Transverse colon (tissue), 4 donors: ENCODE measurements at regions of chr12 and their contacts with region 1.

Region 1: DNA sequence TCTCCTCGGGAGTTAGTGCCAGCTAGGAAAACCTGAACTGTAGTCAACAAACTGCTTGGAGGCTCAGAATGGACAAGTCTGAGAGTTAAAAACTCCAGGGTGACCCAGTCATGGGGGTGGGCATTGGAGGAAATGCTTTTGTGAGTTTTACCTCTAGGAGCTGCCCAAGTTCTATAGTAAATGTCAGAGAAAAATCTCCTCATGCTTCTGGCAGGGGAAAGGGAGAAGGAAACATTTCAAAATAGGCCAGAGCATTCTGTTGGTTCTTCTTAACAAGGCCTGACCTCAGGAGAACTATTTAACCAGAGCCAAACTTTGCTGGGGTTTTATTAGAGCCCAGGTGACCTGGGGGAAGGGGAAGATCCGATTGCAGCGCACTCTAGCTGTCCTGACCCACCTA is 12.3 kb downstream of the NINJ2 start:
- DNase-seq: no peak
- H3K4me3 ChIP-seq: no peak overlapping the region
- H3K27ac ChIP-seq: no peak overlapping the region
- H3K4me1 ChIP-seq: peaks cover 3 to 10% (median 6%) of the 10 kb centered on the region in 4 donors
- H3K27me3 ChIP-seq: no peaks in the 10 kb centered on the region
- CTCF ChIP-seq: no peak
- EP300 ChIP-seq: no peak
- POLR2A ChIP-seq: no peak

Region 2: DNA sequence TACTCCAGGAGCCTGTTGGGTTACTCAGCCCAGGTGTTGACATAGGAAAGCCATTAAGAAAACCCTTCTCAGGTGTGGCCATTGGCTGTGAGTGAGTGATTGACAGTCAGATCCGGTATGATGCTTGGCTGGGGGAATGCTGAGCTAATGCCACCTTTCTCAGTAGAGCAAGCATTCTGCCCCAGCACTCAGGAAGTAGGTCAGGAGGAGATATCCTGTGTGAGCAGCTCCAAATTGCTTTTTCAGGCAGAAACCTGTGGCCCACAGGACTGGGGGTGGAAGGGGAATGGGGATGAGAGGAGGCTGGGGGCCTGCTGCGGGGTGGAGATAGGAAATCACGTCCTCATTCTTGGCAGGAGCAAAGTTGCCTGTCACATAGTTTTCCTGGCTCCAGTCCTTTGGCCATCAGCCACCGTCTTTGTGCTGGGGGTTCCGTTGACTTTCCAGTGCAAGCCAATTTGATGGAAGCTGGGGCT is 43.4 kb before region 1 on chr12:
- in situ Hi-C with region 1: no loop called
- intact Hi-C with region 1: loop called (anchors 2 kb)
- DNase-seq: no peak
- H3K4me3 ChIP-seq: no peak overlapping the region
- H3K27ac ChIP-seq: no peak overlapping the region
- H3K4me1 ChIP-seq: no peaks in the 10 kb centered on the region
- H3K27me3 ChIP-seq: no peaks in the 10 kb centered on the region
- CTCF ChIP-seq: no peak
- EP300 ChIP-seq: no peak
- POLR2A ChIP-seq: no peak

Region 3: DNA sequence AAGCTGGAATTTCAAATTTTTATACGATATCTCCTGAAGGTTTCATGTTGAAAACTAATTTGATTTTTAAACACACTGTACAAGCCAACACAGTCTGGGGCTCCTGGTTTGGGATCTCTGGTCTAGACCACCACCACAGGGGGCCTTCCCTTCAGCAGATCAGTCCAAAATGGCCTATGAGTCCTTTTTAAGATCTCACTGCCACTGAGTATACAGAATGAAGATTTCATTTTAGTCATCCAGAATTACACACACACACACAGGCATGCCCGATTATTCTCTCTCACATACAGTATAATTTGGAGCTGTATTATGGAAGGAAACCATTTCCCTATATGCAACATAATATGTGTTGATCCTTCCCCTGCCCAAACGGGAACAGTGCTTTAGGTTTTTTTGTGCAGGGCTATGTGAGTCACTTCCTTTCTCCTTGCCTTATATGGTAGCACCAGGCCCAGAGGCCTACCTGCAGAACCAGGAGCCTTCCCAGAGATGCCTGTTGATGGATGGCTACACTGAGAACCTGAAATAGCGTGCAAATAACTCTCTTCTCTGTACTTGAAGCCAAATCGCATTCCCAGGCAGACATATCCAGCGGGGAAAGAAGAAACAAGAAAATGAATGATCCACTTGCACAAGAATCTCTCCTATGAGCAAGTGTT is 73.3 kb after region 1 on chr12:
- in situ Hi-C with region 1: no loop called
- intact Hi-C with region 1: no loop called
- DNase-seq: no peak
- H3K4me3 ChIP-seq: no peak overlapping the region
- H3K27ac ChIP-seq: no peak overlapping the region
- H3K4me1 ChIP-seq: peaks cover 0 to 2% (median 0%) of the 10 kb centered on the region in 4 donors
- H3K27me3 ChIP-seq: no peaks in the 10 kb centered on the region
- CTCF ChIP-seq: no peak
- EP300 ChIP-seq: no peak
- POLR2A ChIP-seq: no peak